Activated CD8-positive, alpha-beta T cell treated with anti-CD3 and anti-CD28 coated beads for 36 hours (primary cell): ENCODE measurements at regions of chr19 and their contacts with region 1.

Region 1: DNA sequence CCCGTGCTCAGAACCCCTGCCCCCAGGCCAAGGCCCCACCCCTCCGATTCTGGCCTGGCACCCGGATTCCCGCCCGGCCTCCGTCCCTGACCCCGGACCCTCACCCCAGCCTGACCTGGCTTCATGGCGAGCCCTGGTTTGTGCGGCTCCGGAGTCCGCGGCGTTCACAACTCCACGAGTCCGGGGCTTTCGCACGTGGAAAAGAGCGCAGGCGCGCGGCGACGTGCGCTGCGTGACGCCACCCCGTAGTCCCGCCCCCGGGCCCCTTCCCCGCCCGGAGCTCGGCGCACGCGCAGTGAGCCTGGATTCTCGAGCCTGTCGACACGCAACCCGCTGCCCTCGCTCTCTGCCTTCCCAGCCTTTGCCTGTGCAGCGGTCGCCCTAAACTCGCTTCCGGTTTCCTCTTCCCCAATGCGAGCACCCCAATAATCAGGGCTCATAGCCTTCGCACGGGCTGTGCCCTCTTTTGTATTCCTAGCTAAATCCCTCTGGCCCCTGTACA is at the start of gene FBL:
- DNase-seq: peak; percentile 98
- ATAC-seq: peak; percentile 90
- H3K4me3 Mint-ChIP-seq: peak within 1 kb of the TSS; percentile 91
- H3K27ac Mint-ChIP-seq: peak within 1 kb of the TSS; percentile 95
- H3K4me1 Mint-ChIP-seq: peaks cover 38% of the 10 kb centered on the region
- H3K27me3 Mint-ChIP-seq: no peaks in the 10 kb centered on the region
- CTCF ChIP-seq: no peak
- total RNA-seq, gene FBL: 901 to 905 TPM

Region 2: GRCh38 chr19:39708628-39709351 is 137.4 kb before region 1 on chr19:
- CTCF ChIA-PET with region 1: no interaction called
- POLR2A ChIA-PET with region 1: no interaction called
- intact Hi-C with region 1: no loop called
- DNase-seq: no peak
- ATAC-seq: no peak
- H3K4me3 Mint-ChIP-seq: no peak overlapping the region
- H3K27ac Mint-ChIP-seq: no peak overlapping the region
- H3K4me1 Mint-ChIP-seq: peaks cover 25% of the 10 kb centered on the region
- H3K27me3 Mint-ChIP-seq: peaks cover 10% of the 10 kb centered on the region
- CTCF ChIP-seq: no peak

Region 3: GRCh38 chr19:39828015-39828653 is 18.1 kb before region 1 on chr19:
- CTCF ChIA-PET with region 1: interaction called, 37 read pairs
- POLR2A ChIA-PET with region 1: interaction called, 21 read pairs
- intact Hi-C with region 1: no loop called
- DNase-seq: no peak
- ATAC-seq: no peak
- H3K4me3 Mint-ChIP-seq: peak overlapping the region; percentile 25
- H3K27ac Mint-ChIP-seq: peak overlapping the region; percentile 78
- H3K4me1 Mint-ChIP-seq: peaks cover 22% of the 10 kb centered on the region
- H3K27me3 Mint-ChIP-seq: no peaks in the 10 kb centered on the region
- CTCF ChIP-seq: no peak

Region 4: GRCh38 chr19:39833464-39834286 is 12.6 kb before region 1 on chr19 and contains the start of gene DYRK1B:
- CTCF ChIA-PET with region 1: interaction called, 37 read pairs
- POLR2A ChIA-PET with region 1: interaction called, 21 read pairs
- intact Hi-C with region 1: no loop called
- DNase-seq: peak; percentile 99
- ATAC-seq: peak; percentile 86
- H3K4me3 Mint-ChIP-seq: peak within 1 kb of the TSS; percentile 63
- H3K27ac Mint-ChIP-seq: peak within 1 kb of the TSS; percentile 88
- H3K4me1 Mint-ChIP-seq: peaks cover 31% of the 10 kb centered on the region
- H3K27me3 Mint-ChIP-seq: no peaks in the 10 kb centered on the region
- CTCF ChIP-seq: no peak
- total RNA-seq, gene DYRK1B: 5.4 to 7.0 TPM

Region 5: GRCh38 chr19:39953915-39954314 is 107.7 kb after region 1 on chr19:
- CTCF ChIA-PET with region 1: no interaction called
- POLR2A ChIA-PET with region 1: no interaction called
- intact Hi-C with region 1: no loop called
- DNase-seq: no peak
- ATAC-seq: peak; percentile 6
- H3K4me3 Mint-ChIP-seq: peak overlapping the region; percentile 42
- H3K27ac Mint-ChIP-seq: peak overlapping the region; percentile 98
- H3K4me1 Mint-ChIP-seq: peaks cover 64% of the 10 kb centered on the region
- H3K27me3 Mint-ChIP-seq: no peaks in the 10 kb centered on the region
- CTCF ChIP-seq: no peak